Activated CD4-positive, alpha-beta T cell treated with anti-CD3 and anti-CD28 coated beads for 36 hours (primary cell): ENCODE measurements at regions of chr12 and their contacts with region 1.

Region 1: GRCh38 chr12:47032644-47033043 is 46.8 kb upstream of the PCED1B start:
- DNase-seq: no peak
- ATAC-seq: peak; percentile 81
- H3K4me3 Mint-ChIP-seq: no peak overlapping the region
- H3K27ac Mint-ChIP-seq: peak overlapping the region; percentile 35
- H3K4me1 Mint-ChIP-seq: peaks cover 40% of the 10 kb centered on the region
- H3K27me3 Mint-ChIP-seq: no peaks in the 10 kb centered on the region

Region 2: GRCh38 chr12:46970636-46971035 is 62.0 kb before region 1 on chr12:
- CTCF ChIA-PET with region 1: no interaction called
- POLR2A ChIA-PET with region 1: no interaction called
- intact Hi-C with region 1: no loop called
- DNase-seq: no peak
- ATAC-seq: no peak
- H3K4me3 Mint-ChIP-seq: no peak overlapping the region
- H3K27ac Mint-ChIP-seq: no peak overlapping the region
- H3K4me1 Mint-ChIP-seq: no peaks in the 10 kb centered on the region
- H3K27me3 Mint-ChIP-seq: peaks cover 28% of the 10 kb centered on the region

Region 3: DNA sequence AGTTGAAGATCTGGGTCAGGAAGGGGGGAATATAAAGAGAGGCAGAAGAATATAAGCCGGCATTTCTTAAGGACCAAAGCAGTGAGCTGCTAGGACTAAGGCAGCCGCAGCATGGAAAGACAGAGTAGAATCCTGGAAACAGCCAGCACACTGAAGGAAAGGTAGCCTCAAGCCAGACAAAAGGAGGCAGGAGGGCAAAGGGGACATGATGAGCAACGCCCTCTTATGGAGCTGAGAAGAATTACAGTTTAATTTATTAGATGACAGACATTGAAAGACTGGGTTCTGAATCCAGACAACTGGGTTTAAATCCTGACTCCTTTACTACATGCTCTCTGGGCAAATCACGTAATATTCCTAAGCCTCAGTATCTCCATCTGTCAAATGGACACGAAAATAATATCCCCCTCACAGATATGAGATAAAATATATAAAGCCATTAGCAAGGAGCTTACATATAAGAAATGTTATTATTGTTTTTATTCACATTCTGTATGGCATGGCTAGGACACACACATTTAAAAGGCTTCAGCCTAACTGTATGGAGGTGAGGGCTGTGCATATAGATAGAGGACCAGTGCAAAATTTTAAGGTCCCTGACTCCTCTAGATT is 38.7 kb after region 1 on chr12:
- CTCF ChIA-PET with region 1: interaction called, 43 read pairs
- POLR2A ChIA-PET with region 1: no interaction called
- intact Hi-C with region 1: loop called (anchors 2 to 5 kb)
- DNase-seq: peak; percentile 17
- ATAC-seq: no peak
- H3K4me3 Mint-ChIP-seq: no peak overlapping the region
- H3K27ac Mint-ChIP-seq: no peak overlapping the region
- H3K4me1 Mint-ChIP-seq: peaks cover 24% of the 10 kb centered on the region
- H3K27me3 Mint-ChIP-seq: no peaks in the 10 kb centered on the region

Region 4: GRCh38 chr12:47216150-47216677 is 183.6 kb after region 1 on chr12:
- CTCF ChIA-PET with region 1: interaction called, 10 read pairs
- POLR2A ChIA-PET with region 1: no interaction called
- intact Hi-C with region 1: loop called (anchors 2 to 5 kb)
- DNase-seq: peak; percentile 81
- ATAC-seq: peak; percentile 43
- H3K4me3 Mint-ChIP-seq: peak overlapping the region; percentile 89
- H3K27ac Mint-ChIP-seq: peak overlapping the region; percentile 96
- H3K4me1 Mint-ChIP-seq: peaks cover 38% of the 10 kb centered on the region
- H3K27me3 Mint-ChIP-seq: no peaks in the 10 kb centered on the region

Region 5: DNA sequence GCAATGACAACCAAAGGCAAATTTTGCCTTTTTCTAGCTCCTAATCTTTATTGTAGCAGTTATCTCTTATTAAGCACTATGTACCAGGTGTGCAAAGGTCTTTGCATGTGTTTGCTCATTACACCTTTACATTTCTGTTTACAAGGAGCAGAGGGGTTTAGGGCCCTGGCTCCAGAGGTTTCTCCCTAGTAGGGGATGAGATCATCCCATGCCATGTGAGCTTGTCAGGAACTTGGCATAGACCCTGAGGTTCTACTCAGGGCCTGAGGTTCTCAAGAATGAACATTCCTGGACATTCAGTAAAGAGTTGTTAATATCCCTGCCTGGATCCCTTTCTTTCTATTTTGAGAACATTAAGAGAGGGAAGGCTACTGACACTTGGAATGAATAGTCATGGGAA is 381.2 kb after region 1 on chr12:
- CTCF ChIA-PET with region 1: interaction called, 4 read pairs
- POLR2A ChIA-PET with region 1: no interaction called
- intact Hi-C with region 1: loop called in 1 of 2 experiments (anchors 5 kb)
- DNase-seq: no peak
- ATAC-seq: no peak
- H3K4me3 Mint-ChIP-seq: no peak overlapping the region
- H3K27ac Mint-ChIP-seq: peak overlapping the region; percentile 43
- H3K4me1 Mint-ChIP-seq: peaks cover 80% of the 10 kb centered on the region
- H3K27me3 Mint-ChIP-seq: no peaks in the 10 kb centered on the region

Region 6: GRCh38 chr12:47686645-47687240 is 654.1 kb after region 1 on chr12:
- CTCF ChIA-PET with region 1: interaction called, 23 read pairs
- POLR2A ChIA-PET with region 1: no interaction called
- intact Hi-C with region 1: loop called (anchors 1 kb)
- DNase-seq: peak; percentile 42
- ATAC-seq: no peak
- H3K4me3 Mint-ChIP-seq: no peak overlapping the region
- H3K27ac Mint-ChIP-seq: no peak overlapping the region
- H3K4me1 Mint-ChIP-seq: peaks cover 11% of the 10 kb centered on the region
- H3K27me3 Mint-ChIP-seq: no peaks in the 10 kb centered on the region